ENCODE measurements at regions of chr16 and their contacts with region 1.

Region 1: GRCh38 chr16:26649381-26650045 is 417.2 kb upstream of the C16orf82 start:
- DNase-seq: no peak

Region 2: GRCh38 chr16:26605626-26606271 is 43.8 kb before region 1 on chr16:
- intact Hi-C with region 1: loop called in 1 of 2 experiments (anchors 10 kb)
- DNase-seq: no peak

Region 3: DNA sequence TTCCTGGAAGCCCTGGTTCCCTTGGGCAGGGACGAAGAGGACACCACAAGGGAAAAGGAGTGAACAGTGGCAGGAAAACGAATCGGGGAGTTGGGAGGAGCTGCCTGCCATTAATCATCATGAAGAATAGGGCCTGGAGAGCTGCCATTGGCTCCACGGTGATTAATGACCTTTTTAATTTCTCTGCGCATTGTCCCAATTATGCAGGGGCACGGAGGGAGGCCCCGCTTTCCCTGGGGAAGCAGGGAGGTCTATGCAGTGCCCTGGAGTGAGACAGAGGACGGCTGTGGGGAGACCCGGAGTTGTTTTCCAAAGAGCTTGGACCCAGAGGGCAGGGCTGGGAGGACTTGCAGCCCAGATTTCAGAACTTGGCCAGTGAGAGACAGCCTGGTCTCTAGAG is 78.3 kb after region 1 on chr16:
- intact Hi-C with region 1: no loop called
- DNase-seq: no peak